H1 (cell line): ENCODE measurements at regions of chr5 and their contacts with region 1.

Region 1: DNA sequence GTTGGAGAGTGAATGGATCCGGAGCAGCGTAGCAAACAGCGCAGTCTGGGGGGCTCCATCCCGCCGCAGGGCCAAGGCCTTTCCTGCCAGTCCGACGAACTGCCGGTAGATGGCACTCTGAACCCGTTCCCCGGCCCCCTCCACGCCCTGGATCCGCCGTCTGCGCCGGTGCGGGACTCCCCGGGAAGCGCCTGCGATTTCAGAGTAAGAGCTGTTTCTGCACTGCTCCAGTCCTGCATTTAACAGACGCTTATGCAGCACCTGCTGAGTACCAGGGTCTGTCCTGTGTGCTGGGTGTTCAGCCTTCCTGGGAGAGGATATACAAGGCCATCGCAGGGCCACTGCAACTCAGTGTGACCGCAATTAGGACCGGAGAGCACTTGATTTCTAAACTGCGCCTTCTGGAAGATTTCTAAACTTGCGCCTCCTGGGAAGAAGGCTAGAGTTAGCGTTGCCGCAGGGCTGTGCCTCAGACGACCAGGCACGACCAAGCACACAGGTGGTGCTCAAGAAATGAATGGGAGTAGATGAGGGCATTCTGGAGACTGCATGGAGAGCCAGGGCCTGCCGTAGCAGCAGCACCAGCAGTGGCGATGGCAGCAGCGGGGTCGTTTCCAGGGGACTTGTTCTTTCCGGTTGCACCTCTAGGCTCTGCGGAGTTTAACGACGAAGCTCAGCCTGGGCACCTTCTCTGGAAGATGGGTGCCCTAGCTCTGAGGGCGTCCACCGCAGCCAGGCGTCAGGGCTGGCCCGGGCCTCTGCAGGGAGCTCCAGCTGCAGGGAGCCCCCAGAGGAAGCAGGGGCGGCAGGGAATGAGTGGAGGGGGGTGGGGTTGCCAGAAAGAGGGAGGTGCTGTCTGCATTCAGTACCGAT is 14.3 kb upstream of the TIFAB start:
- DNase-seq: peak in 1 of 2 experiments; percentile 93
- H3K4me3 ChIP-seq: peak overlapping the region; percentile 5 to 57 (median 30); a peak in 7 of 8 replicates
- H3K27ac ChIP-seq: no peak overlapping the region
- H3K4me1 ChIP-seq: peaks cover 0 to 15% (median 8%) of the 10 kb centered on the region in 4 experiments; a peak in 5 of 7 replicates
- H3K27me3 ChIP-seq: peaks cover 52 to 86% (median 68%) of the 10 kb centered on the region in 4 experiments
- CTCF ChIP-seq: peak; percentile 91 to 95 (median 94)
- EP300 ChIP-seq: no peak
- POLR2A ChIP-seq: no peak
- RAD21 ChIP-seq: peak; percentile 95 to 97

Region 2: DNA sequence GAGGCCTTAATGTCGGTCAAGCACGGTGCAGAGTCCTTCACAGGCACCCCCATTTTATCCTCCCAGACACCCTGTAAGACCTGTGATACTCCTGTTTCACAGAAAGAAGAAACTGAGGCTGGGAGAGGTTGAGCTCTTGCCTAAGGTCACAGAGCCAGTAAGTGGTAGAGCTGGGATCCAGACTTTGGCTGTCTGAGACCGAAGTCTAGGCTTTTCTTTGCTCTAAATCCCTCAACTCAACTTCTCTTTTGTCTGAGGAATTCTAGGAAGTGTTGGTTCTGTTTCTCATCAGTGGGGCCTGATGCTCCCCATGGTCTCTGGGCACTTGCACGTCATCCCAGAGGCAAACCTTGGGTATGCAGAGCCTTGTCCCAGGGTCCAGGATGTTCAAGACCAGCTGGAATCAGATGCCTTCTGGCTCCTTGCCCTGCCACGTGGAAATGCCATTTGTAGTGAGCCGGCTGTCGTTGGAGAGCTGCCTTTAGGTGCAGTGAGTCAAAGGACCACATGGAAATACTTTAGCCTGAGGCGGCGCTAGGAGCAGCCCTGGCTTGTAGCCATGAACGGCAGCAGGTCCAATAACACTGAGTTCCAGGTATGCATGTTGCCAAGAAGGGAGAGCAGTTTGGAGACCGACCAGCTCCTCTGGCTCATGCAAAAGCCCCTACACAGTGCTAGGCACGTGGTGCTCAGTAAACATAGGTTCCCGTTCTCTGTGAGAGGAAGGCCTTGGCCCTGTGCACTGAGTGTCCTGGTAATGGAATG is 28.4 kb before region 1 on chr5:
- CTCF ChIA-PET with region 1: interaction called, 264 read pairs
- POLR2A ChIA-PET with region 1: no interaction called
- DNase-seq: peak in 1 of 2 experiments; percentile 41
- H3K4me3 ChIP-seq: no peak overlapping the region
- H3K27ac ChIP-seq: no peak overlapping the region
- H3K4me1 ChIP-seq: no peaks in the 10 kb centered on the region; a peak in 1 of 7 replicates
- H3K27me3 ChIP-seq: no peaks in the 10 kb centered on the region
- CTCF ChIP-seq: no peak
- EP300 ChIP-seq: no peak
- POLR2A ChIP-seq: no peak
- RAD21 ChIP-seq: no peak

Region 3: GRCh38 chr5:135488727-135489465 is 22.5 kb after region 1 on chr5:
- CTCF ChIA-PET with region 1: interaction called, 137 read pairs
- POLR2A ChIA-PET with region 1: interaction called, 4 read pairs
- DNase-seq: peak; percentile 62 to 84
- H3K4me3 ChIP-seq: peak overlapping the region; percentile 32 to 56 (median 46); a peak in 7 of 8 replicates
- H3K27ac ChIP-seq: no peak overlapping the region
- H3K4me1 ChIP-seq: peaks cover 4 to 47% (median 27%) of the 10 kb centered on the region in 4 experiments
- H3K27me3 ChIP-seq: peaks cover 83 to 99% (median 96%) of the 10 kb centered on the region in 4 experiments
- CTCF ChIP-seq: no peak
- EP300 ChIP-seq: no peak
- POLR2A ChIP-seq: no peak
- RAD21 ChIP-seq: no peak; a peak in 1 of 4 replicates

Region 4: GRCh38 chr5:135535820-135536801 is 69.7 kb after region 1 on chr5 and contains the start of gene NEUROG1:
- CTCF ChIA-PET with region 1: interaction called, 35 read pairs
- POLR2A ChIA-PET with region 1: no interaction called
- DNase-seq: peak in 1 of 2 experiments; percentile 87
- H3K4me3 ChIP-seq: peak within 1 kb of the TSS; percentile 19 to 51 (median 28); a peak in 7 of 8 replicates
- H3K27ac ChIP-seq: no peak within 1 kb of the TSS
- H3K4me1 ChIP-seq: peaks cover 0 to 12% (median 11%) of the 10 kb centered on the region in 4 experiments; a peak in 6 of 7 replicates
- H3K27me3 ChIP-seq: peaks cover 96 to 100% (median 98%) of the 10 kb centered on the region in 4 experiments
- CTCF ChIP-seq: no peak
- EP300 ChIP-seq: peak in 1 of 2 experiments; percentile 18; a peak in 1 of 3 replicates
- POLR2A ChIP-seq: no peak
- RAD21 ChIP-seq: no peak
- total RNA-seq, gene NEUROG1: not detected in 2 replicates

Region 5: DNA sequence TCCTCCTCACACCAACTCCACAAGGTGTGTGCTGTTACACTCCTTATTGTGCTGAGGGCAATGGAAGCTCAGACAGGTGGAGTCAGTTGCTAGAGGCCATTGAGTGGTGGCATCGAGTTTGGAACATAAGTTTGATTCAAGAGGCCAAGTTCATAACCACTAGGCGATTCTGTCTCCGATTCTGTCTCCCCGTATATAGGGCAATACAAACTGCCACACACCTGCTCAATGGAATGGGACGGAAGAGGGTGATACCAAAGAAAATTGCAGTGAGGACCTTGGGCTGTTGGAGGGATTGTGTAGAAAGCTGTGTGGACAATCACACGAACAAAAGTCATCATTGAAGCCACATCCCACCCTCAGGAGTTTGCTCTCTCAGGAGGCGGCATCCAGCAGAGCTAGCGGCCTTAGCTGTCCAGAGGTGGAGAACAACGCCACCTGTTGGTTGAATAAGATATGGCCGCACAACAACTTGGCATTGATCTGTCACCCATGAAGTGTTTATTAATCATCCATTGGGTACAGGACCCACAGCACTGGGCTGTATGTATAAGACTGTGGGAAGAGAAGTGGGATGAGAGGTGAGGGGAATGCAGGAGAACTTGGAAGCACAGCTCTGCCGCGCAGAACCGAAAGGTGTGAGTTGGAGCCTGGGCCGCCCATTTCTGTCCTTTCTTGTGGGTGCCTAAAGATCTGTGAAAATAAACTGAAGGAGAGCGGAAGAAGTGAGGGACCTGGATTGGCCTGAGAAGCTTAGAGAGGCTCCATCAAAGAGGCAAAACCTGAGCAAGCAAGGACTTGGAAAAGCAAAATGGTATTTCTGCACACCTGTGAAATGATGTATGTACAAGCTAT is 85.4 kb after region 1 on chr5:
- CTCF ChIA-PET with region 1: interaction called, 778 read pairs
- POLR2A ChIA-PET with region 1: interaction called, 6 read pairs
- DNase-seq: peak in 1 of 2 experiments; percentile 82
- H3K4me3 ChIP-seq: no peak overlapping the region
- H3K27ac ChIP-seq: no peak overlapping the region
- H3K4me1 ChIP-seq: no peaks in the 10 kb centered on the region; a peak in 2 of 7 replicates
- H3K27me3 ChIP-seq: peaks cover 41 to 50% (median 49%) of the 10 kb centered on the region in 4 experiments
- CTCF ChIP-seq: peak; percentile 64 to 87 (median 85)
- EP300 ChIP-seq: no peak
- POLR2A ChIP-seq: no peak
- RAD21 ChIP-seq: peak; percentile 89 to 91

Region 6: GRCh38 chr5:135729321-135729786 is 262.9 kb after region 1 on chr5:
- CTCF ChIA-PET with region 1: interaction called, 26 read pairs
- POLR2A ChIA-PET with region 1: no interaction called
- DNase-seq: no peak
- H3K4me3 ChIP-seq: no peak overlapping the region
- H3K27ac ChIP-seq: no peak overlapping the region
- H3K4me1 ChIP-seq: no peaks in the 10 kb centered on the region; a peak in 1 of 7 replicates
- H3K27me3 ChIP-seq: no peaks in the 10 kb centered on the region
- CTCF ChIP-seq: peak in 2 of 3 experiments; percentile 24 to 49; a peak in 2 of 4 replicates
- EP300 ChIP-seq: no peak
- POLR2A ChIP-seq: no peak
- RAD21 ChIP-seq: peak; percentile 69 to 75

Region 7: GRCh38 chr5:135834639-135835529 is 368.5 kb after region 1 on chr5 and contains the start of gene SLC25A48:
- CTCF ChIA-PET with region 1: interaction called, 50 read pairs
- POLR2A ChIA-PET with region 1: no interaction called
- DNase-seq: peak; percentile 75 to 88
- H3K4me3 ChIP-seq: peak within 1 kb of the TSS; percentile 46 to 84 (median 72)
- H3K27ac ChIP-seq: no peak within 1 kb of the TSS
- H3K4me1 ChIP-seq: peaks cover 0 to 5% (median 1%) of the 10 kb centered on the region in 4 experiments; a peak in 2 of 7 replicates
- H3K27me3 ChIP-seq: peaks cover 8 to 44% (median 32%) of the 10 kb centered on the region in 4 experiments
- CTCF ChIP-seq: peak in 2 of 3 experiments; percentile 10 to 76; a peak in 2 of 4 replicates
- EP300 ChIP-seq: no peak
- POLR2A ChIP-seq: no peak
- RAD21 ChIP-seq: peak; percentile 23 to 43; a peak in 2 of 4 replicates
- total RNA-seq, gene SLC25A48: 1.8 TPM in 2 replicates